Mammary epithelial cell (primary cell): ENCODE measurements at regions of chrX and their contacts with region 1.

Region 1: DNA sequence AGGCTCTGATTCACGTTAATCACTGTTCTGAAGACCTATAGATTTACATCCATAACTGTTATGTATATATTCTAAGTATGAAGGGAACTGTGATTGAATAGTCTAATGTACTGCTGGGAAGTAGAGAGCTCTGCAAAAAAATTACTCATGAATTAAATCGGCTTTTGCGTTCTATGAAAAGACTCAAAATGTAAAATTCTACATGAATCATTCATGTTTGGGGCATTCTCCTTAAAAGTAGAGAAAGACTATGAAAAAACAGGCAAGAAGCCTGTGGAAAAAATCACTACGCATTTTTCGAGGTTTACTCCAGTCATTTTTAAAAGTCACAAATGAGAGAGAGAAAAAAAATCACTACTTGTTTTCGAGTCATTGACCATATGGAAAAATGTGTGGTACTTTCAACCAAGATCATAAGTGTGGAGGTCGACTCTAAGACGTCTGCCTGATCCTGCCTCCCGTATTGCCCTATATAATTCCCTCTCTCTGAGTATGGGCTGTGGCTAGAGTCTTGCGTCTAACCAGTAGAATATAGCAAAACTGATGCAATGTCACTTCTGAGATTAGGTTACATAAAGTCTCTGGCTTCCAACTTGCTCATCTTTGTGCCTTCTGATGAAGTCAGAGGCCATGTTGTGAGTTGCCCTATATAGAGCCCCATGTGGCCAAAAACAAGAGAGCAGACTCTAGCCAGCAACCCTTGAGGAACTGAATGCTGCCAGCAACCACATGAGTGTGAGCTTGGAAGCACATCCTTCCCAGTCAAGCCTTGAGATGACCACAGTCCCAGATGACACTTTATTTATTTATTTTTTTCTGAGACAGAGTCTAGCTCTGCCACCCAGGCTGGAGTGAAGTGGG is 32.1 kb upstream of the VEGFD start:
- DNase-seq: no peak
- H3K4me3 ChIP-seq: no peak overlapping the region
- H3K27ac ChIP-seq: no peak overlapping the region
- H3K4me1 ChIP-seq: no peaks in the 10 kb centered on the region
- H3K27me3 ChIP-seq: no peaks in the 10 kb centered on the region
- CTCF ChIP-seq: no peak

Region 2: GRCh38 chrX:15202454-15203143 is 213.8 kb before region 1 on chrX:
- CTCF ChIA-PET with region 1: no interaction called
- dilution Hi-C with region 1: no loop called
- in situ Hi-C with region 1: no loop called
- intact Hi-C with region 1: no loop called
- DNase-seq: peak; percentile 68
- H3K4me3 ChIP-seq: no peak overlapping the region
- H3K27ac ChIP-seq: no peak overlapping the region
- H3K4me1 ChIP-seq: no peaks in the 10 kb centered on the region
- H3K27me3 ChIP-seq: no peaks in the 10 kb centered on the region
- CTCF ChIP-seq: no peak

Region 3: DNA sequence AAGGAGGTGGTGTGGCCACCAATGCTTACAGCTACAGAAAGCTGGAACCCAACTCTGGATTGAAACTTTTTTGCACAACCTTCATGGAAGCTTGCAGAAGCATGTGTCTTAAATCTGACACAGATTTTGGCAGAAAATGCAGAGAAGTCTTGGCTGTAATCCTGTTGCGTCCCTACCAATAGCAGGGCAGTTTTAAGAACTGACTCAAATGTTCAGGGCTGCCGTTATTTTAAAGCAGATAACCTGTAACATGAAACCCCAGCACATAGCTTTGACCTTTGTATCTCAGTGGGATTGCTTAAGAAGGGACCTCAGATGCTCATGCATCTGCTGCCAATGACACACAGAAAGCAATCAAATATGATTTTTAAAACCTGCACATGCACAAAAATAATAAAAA is 32.1 kb before region 1 on chrX and contains the start of gene VEGFD:
- CTCF ChIA-PET with region 1: no interaction called
- dilution Hi-C with region 1: no loop called
- in situ Hi-C with region 1: no loop called
- intact Hi-C with region 1: loop called (anchors 5 kb)
- DNase-seq: no peak
- H3K4me3 ChIP-seq: no peak within 1 kb of the TSS
- H3K27ac ChIP-seq: no peak within 1 kb of the TSS
- H3K4me1 ChIP-seq: no peaks in the 10 kb centered on the region
- H3K27me3 ChIP-seq: no peaks in the 10 kb centered on the region
- CTCF ChIP-seq: no peak
- total RNA-seq, gene VEGFD: under 0.01 to 0.28 TPM

Region 4: DNA sequence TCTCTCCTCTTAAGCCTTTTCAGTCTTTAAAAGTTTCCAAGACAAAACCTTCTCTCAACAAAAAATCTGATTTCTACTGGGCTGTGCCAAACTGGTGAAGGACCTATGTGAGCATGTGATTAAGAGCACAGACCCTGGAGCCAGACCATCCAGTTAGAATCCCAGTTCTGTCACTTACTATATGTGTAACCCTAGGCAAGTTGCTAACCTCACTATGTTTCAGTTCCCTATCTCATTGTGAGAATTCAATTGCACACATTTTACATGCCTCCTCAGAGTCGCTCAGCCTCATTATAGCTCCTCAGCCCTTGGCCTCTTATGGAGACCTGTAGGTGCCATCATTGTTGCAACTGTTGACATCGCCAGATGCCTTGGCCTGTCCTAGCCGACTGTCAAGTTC is 22.0 kb after region 1 on chrX:
- CTCF ChIA-PET with region 1: no interaction called
- dilution Hi-C with region 1: no loop called
- in situ Hi-C with region 1: no loop called
- intact Hi-C with region 1: loop called (anchors 1 kb)
- DNase-seq: no peak
- H3K4me3 ChIP-seq: no peak overlapping the region
- H3K27ac ChIP-seq: no peak overlapping the region
- H3K4me1 ChIP-seq: no peaks in the 10 kb centered on the region
- H3K27me3 ChIP-seq: no peaks in the 10 kb centered on the region
- CTCF ChIP-seq: no peak